Lower leg skin (tissue), 4 donors: ENCODE measurements at regions of chr18 and their contacts with region 1.

Region 1: GRCh38 chr18:21389283-21389682 is 147.3 kb downstream of the GREB1L start:
- DNase-seq: no peak
- H3K4me3 ChIP-seq: no peak overlapping the region
- CTCF ChIP-seq: no peak
- POLR2A ChIP-seq: no peak

Region 2: GRCh38 chr18:21315741-21316187 is 73.5 kb before region 1 on chr18:
- intact Hi-C with region 1: no loop called
- DNase-seq: no peak
- H3K4me3 ChIP-seq: no peak overlapping the region
- CTCF ChIP-seq: no peak
- POLR2A ChIP-seq: no peak

Region 3: DNA sequence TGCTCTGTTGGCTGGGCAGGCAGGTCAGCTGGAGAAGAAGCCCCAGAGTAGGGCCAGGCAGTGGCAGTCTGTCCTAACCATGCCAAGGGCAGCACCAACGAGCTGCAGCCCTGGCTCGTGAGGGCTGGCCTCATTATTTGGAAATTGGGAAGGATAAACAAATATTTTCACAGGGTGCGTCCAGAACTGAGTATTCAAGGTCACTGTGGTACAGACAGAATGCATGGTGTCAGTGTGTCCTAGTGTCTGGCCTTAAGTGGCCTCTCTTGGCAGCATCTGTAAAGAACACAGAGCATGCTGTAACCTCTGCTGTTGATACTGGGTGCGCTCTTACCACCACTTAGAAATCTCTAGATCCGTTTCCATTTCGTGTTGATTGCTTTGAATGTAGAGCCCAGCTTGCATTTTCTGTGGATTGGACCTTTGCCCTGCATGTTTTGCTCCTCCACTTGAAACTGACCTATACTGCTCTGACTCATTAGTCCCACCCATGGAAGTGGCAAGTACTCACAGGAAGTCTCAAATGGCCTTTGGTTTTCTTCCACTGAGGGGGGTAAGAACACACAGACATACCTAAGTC is 59.1 kb before region 1 on chr18:
- intact Hi-C with region 1: loop called (anchors 10 kb)
- DNase-seq: peak in 1 of 2 donors; percentile 37
- H3K4me3 ChIP-seq: no peak overlapping the region
- CTCF ChIP-seq: no peak
- POLR2A ChIP-seq: no peak